Prostate gland (tissue), 2 donors: ENCODE measurements at regions of chr18 and their contacts with region 1.

Region 1: DNA sequence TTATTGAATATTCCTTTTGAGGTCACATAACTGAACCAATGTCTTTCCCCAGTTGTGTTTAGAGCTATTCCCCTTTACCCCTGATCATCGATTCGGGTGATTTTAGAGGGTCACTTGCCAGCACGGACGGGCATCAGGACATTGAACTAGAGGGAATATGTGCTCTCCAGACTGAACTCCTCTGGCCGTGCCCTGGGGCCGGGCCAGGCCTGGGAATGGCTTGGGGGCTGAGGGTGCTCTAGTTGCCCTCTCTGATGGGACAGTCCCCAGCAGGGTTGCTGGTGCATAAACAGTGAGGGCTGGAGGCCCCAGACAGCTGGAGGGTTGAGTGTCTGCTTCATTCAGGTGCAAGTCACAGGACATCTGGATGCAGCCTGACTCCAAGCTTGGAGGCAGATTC is 90.7 kb downstream of the SMIM21 start:
- DNase-seq: no peak
- H3K4me3 ChIP-seq: no peak overlapping the region
- H3K27ac ChIP-seq: no peak overlapping the region
- H3K4me1 ChIP-seq: no peaks in the 10 kb centered on the region
- H3K27me3 ChIP-seq: no peaks in the 10 kb centered on the region
- CTCF ChIP-seq: no peak
- POLR2A ChIP-seq: no peak

Region 2: DNA sequence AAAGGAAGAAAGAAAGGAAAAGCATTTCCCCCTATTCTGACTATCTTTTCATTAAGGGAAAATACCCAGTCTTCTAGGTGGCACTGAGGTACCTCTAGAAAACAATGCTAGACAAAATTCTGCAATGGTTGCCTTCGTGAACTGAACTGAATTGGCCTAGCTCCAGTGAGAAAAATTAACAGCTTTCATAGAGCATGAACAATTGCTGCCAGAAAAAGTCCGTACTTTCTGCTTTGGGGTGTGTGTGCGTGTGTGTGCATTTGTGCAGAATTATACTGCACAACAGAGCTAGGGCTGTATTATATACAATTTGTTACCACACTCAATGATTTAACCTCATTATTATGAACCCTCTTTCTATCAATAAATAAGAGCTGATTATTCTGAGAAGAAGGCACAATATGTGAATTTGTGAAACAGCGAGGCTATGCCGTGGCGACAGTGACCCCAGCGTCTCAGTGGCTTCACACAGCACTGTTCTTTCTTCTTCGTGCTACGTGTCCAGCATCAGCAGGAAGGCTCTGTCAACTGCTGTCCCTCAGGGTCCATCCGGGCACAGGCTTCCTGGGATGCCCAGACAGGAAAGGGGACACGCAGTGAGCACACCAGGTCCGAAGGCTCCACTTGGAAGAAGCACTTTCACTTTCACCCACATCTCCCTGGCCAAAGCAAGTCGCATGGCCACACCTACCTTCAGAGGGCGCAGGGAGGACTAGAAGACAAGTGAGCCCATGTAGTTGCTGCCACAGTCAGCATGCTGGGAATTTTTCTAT is 175.3 kb before region 1 on chr18:
- intact Hi-C with region 1: no loop called
- DNase-seq: no peak
- H3K4me3 ChIP-seq: peak overlapping the region in 1 of 2 donors; percentile 14
- H3K27ac ChIP-seq: no peak overlapping the region
- H3K4me1 ChIP-seq: no peaks in the 10 kb centered on the region
- H3K27me3 ChIP-seq: no peaks in the 10 kb centered on the region
- CTCF ChIP-seq: no peak
- POLR2A ChIP-seq: no peak

Region 3: DNA sequence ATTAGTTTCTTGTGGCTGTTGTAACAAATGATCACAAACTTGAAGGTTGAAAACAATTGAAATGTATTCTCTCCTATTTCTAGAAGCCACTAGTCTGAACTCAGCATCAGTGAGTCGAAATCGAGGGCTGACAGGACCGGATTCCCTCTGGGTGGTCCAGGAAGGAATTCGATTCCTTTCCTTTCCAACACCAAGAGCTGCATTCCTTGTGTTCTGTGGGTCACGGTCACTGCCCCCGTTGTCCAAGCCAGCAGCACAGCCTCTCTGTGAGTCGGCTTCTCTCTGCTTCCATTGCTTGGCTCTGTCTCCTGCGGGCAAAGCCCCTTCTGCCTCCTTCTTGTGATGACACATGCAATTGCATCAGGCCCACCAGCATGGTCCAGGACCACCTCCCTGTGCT is 23.4 kb after region 1 on chr18:
- intact Hi-C with region 1: loop called (anchors 2 kb)
- DNase-seq: no peak
- H3K4me3 ChIP-seq: no peak overlapping the region
- H3K27ac ChIP-seq: no peak overlapping the region
- H3K4me1 ChIP-seq: no peaks in the 10 kb centered on the region
- H3K27me3 ChIP-seq: no peaks in the 10 kb centered on the region
- CTCF ChIP-seq: no peak
- POLR2A ChIP-seq: no peak

Region 4: DNA sequence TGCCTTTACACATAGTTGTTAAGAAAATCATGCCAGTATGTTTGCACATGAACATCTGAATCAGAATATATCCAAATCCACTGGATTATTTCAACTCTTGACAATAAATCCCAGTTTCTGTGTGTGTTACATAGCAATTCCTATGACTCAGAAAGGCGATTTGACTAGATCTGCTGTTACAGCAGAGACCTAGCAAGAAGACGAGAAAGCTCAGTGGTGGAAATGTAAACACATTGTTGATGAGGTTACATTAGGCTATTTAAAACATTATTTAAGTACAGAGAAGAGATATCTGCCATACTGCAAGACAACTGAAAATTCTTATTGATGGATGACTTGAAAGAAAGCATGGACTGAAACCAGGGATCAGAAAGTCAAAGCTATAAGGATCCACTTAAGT is 163.8 kb after region 1 on chr18:
- intact Hi-C with region 1: no loop called
- DNase-seq: no peak
- H3K4me3 ChIP-seq: no peak overlapping the region
- H3K27ac ChIP-seq: no peak overlapping the region
- H3K4me1 ChIP-seq: no peaks in the 10 kb centered on the region
- H3K27me3 ChIP-seq: no peaks in the 10 kb centered on the region
- CTCF ChIP-seq: no peak
- POLR2A ChIP-seq: no peak

Region 5: DNA sequence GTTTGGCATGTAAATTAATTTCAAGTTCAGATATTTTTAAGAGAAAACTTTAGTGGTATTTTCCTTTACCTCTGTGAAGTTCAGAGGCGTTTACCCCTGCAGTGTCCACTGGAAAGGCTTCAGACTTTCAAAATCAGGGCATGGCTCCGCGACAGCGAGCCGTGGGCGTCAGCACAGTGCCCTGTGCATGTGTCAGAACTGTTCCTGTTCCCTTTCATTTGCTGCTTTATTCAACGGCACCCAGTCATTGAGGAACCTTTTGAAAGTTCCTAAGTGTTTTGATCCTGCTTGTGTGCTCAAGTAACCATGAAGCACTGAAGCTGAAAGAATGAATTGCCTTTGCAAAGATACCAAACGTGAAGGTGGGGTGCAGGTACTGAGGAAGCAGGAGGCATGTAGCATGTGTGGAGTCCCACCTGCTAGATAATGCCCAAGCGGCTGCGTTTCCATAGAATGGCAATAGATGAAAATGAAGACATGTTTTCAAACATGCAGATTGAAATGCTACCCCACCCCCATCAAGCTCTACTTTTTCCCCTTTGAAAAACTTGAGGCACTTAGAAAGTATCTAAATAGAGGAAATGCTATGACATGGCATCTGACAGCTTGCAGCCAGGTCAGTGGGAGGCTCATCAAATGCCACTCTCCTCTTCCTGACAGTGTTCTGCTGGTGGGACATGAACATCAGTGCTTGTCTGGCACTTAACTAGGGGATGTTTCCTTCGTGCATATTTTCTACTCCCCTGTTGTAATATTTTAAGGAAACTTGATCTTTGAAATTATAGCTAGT is 1634.2 kb after region 1 on chr18:
- intact Hi-C with region 1: no loop called
- DNase-seq: no peak
- H3K4me3 ChIP-seq: no peak overlapping the region
- H3K27ac ChIP-seq: no peak overlapping the region
- H3K4me1 ChIP-seq: no peaks in the 10 kb centered on the region
- H3K27me3 ChIP-seq: no peaks in the 10 kb centered on the region
- CTCF ChIP-seq: no peak
- POLR2A ChIP-seq: no peak